ENCODE measurements at regions of chrX and their contacts with region 1.

Region 1: GRCh38 chrX:49191033-49191871 is 5.1 kb upstream of the PRICKLE3 start:
- DNase-seq: peak; percentile 91
- H3K4me3 Mint-ChIP-seq: peak overlapping the region; percentile 92
- H3K27ac Mint-ChIP-seq: peak overlapping the region; percentile 91
- H3K4me1 Mint-ChIP-seq: peaks cover 37% of the 10 kb centered on the region
- H3K27me3 Mint-ChIP-seq: no peaks in the 10 kb centered on the region

Region 2: GRCh38 chrX:49053223-49054072 is 137.8 kb before region 1 on chrX:
- CTCF ChIA-PET with region 1: no interaction called
- POLR2A ChIA-PET with region 1: no interaction called
- intact Hi-C with region 1: no loop called
- DNase-seq: peak; percentile 78
- H3K4me3 Mint-ChIP-seq: peak overlapping the region; percentile 83
- H3K27ac Mint-ChIP-seq: peak overlapping the region; percentile 93
- H3K4me1 Mint-ChIP-seq: peaks cover 33% of the 10 kb centered on the region
- H3K27me3 Mint-ChIP-seq: no peaks in the 10 kb centered on the region

Region 3: GRCh38 chrX:49120099-49120498 is 71.2 kb before region 1 on chrX:
- CTCF ChIA-PET with region 1: no interaction called
- POLR2A ChIA-PET with region 1: no interaction called
- intact Hi-C with region 1: loop called (anchors 5 kb)
- DNase-seq: no peak
- H3K4me3 Mint-ChIP-seq: no peak overlapping the region
- H3K27ac Mint-ChIP-seq: no peak overlapping the region
- H3K4me1 Mint-ChIP-seq: peaks cover 37% of the 10 kb centered on the region
- H3K27me3 Mint-ChIP-seq: no peaks in the 10 kb centered on the region

Region 4: GRCh38 chrX:49147936-49148335 is 43.3 kb before region 1 on chrX:
- CTCF ChIA-PET with region 1: no interaction called
- POLR2A ChIA-PET with region 1: no interaction called
- intact Hi-C with region 1: no loop called
- DNase-seq: no peak
- H3K4me3 Mint-ChIP-seq: no peak overlapping the region
- H3K27ac Mint-ChIP-seq: no peak overlapping the region
- H3K4me1 Mint-ChIP-seq: no peaks in the 10 kb centered on the region
- H3K27me3 Mint-ChIP-seq: no peaks in the 10 kb centered on the region

Region 5: DNA sequence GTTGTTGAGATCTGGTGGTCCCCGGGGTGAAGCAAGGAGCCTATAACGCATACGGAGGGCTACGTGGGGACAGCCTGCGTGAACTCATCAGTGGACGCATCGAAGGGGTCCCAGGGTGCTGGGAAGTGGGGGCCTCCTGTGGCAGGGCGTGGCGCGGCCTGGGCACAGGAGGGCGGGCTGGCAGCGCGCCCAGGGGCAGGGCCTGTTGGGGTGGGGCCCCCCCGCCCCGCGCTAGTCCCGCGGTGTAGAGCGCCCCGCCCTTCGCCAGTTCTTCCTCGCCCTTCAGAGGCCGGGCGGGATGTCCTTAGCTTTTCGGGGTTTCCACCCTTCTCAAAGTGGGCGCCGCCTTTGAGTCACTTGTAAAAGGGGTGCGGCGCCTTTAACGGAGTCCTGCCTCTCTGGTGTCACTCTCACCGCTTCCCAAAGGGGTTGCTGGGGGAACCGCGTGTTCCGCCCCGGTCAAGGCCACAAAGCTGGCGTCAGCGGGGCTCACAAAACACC is 18.9 kb before region 1 on chrX:
- CTCF ChIA-PET with region 1: interaction called, 23 read pairs
- POLR2A ChIA-PET with region 1: interaction called, 11 read pairs
- intact Hi-C with region 1: loop called (anchors 1 kb)
- DNase-seq: peak; percentile 83
- H3K4me3 Mint-ChIP-seq: peak overlapping the region; percentile 86
- H3K27ac Mint-ChIP-seq: peak overlapping the region; percentile 91
- H3K4me1 Mint-ChIP-seq: peaks cover 30% of the 10 kb centered on the region
- H3K27me3 Mint-ChIP-seq: no peaks in the 10 kb centered on the region

Region 6: GRCh38 chrX:49269010-49269767 is 77.9 kb after region 1 on chrX:
- CTCF ChIA-PET with region 1: interaction called, 8 read pairs
- POLR2A ChIA-PET with region 1: interaction called, 3 read pairs
- intact Hi-C with region 1: loop called (anchors 1 kb)
- DNase-seq: peak; percentile 97
- H3K4me3 Mint-ChIP-seq: peak overlapping the region; percentile 91
- H3K27ac Mint-ChIP-seq: peak overlapping the region; percentile 98
- H3K4me1 Mint-ChIP-seq: peaks cover 56% of the 10 kb centered on the region
- H3K27me3 Mint-ChIP-seq: no peaks in the 10 kb centered on the region

Region 7: DNA sequence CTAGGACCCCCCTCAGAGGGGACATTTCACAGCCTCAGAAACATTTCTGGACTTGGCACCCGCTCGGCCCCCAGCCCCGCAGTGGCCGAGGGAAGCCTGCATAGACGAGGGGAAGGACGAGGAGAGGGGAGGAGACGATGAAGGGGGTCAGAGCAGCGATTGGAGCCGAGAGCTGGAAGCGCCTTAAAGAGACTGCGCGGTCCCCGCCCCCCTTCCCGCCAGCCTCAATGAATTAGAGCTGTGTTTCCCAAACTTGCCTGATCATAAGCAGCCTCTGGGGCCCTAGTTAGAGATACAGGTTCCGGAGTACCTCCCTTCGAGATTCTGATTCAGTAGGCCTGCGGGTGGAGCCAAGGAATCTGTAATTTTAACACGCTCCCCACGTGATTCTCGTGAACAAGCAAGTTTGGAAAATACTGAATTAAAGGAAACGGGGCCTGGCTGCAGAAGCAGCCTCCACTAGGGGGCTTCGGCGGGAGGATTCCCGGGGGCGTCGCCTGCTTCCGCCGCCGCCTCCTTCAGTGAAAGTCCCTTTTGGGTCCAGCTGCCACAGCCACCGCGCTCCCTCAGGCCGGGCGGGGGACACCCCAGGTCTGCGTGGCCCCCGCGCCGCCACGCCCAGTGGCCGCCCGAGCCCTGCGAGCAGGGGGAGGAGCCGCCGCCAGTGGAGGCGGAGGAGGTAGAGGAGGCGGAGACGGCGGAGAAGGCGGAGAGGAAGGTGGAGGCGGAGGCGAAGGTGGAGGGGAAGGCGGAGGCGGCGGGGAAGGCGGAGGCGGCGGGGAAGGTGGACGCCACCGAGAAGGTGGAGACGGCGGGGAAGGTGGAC is 687.8 kb after region 1 on chrX and contains the start of gene USP27X:
- CTCF ChIA-PET with region 1: no interaction called
- POLR2A ChIA-PET with region 1: no interaction called
- intact Hi-C with region 1: loop called (anchors 5 kb)
- DNase-seq: peak; percentile 78
- H3K4me3 Mint-ChIP-seq: peak within 1 kb of the TSS; percentile 74
- H3K27ac Mint-ChIP-seq: peak within 1 kb of the TSS; percentile 65
- H3K4me1 Mint-ChIP-seq: peaks cover 34% of the 10 kb centered on the region
- H3K27me3 Mint-ChIP-seq: no peaks in the 10 kb centered on the region
- total RNA-seq, gene USP27X: 2.0 TPM

Measured in activated CD4-positive, alpha-beta memory T cell treated with anti-CD3 and anti-CD28 coated beads for 36 hours (primary cell).